ENCODE measurements at regions of chr11 and their contacts with region 1.

Region 1: GRCh38 chr11:123054301-123055065 is 7.5 kb downstream of the HSPA8 start:
- DNase-seq: no peak
- H3K4me3 Mint-ChIP-seq: no peak overlapping the region
- H3K27ac Mint-ChIP-seq: peak overlapping the region; percentile 67
- H3K4me1 Mint-ChIP-seq: peaks cover 54% of the 10 kb centered on the region
- H3K27me3 Mint-ChIP-seq: no peaks in the 10 kb centered on the region

Region 2: GRCh38 chr11:122998727-122999366 is 55.6 kb before region 1 on chr11:
- CTCF ChIA-PET with region 1: no interaction called
- POLR2A ChIA-PET with region 1: no interaction called
- DNase-seq: no peak
- H3K4me3 Mint-ChIP-seq: no peak overlapping the region
- H3K27ac Mint-ChIP-seq: no peak overlapping the region
- H3K4me1 Mint-ChIP-seq: no peaks in the 10 kb centered on the region
- H3K27me3 Mint-ChIP-seq: peaks cover 31% of the 10 kb centered on the region

Region 3: DNA sequence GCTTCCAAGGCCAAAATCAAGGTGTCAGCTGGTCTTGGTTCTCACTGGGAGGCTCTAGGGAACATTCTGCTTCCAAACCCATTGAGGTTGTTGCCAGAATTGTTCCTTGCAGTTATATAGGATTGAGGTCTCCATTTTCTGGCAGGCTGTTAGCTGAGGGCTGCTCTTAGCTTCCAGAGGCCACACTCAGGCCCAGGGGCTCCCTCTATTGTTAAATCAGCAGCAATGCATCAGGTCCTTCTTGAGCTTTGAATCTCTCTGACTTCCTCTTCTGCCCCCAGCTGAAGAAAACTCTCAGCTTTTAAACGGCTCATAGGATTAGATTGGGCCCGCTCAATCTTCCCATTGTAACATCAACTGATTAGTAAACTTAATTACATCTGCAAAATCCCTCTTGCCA is 33.5 kb before region 1 on chr11:
- CTCF ChIA-PET with region 1: interaction called, 65 read pairs
- POLR2A ChIA-PET with region 1: interaction called, 3 read pairs
- DNase-seq: peak; percentile 38
- H3K4me3 Mint-ChIP-seq: no peak overlapping the region
- H3K27ac Mint-ChIP-seq: no peak overlapping the region
- H3K4me1 Mint-ChIP-seq: peaks cover 6% of the 10 kb centered on the region
- H3K27me3 Mint-ChIP-seq: peaks cover 18% of the 10 kb centered on the region

Region 4: DNA sequence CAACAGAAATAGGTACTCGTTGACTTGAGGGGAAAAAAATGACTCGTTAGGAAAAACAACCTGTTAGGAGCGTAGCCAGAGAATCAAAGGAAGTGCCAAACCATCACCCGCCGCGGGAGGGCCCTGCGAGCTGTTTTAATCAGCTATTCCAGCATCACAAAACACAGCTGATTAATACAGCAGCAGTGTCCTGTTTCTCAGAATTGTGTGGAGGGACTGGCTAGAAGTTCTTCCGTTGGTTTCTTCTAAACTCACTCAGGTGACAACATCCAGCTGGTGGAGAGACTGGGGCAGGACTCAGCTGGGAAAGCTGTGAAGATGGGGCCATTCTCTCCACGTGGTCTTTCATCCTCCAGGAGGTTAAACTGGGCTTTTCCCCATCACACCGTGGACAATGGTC is 20.6 kb before region 1 on chr11:
- CTCF ChIA-PET with region 1: interaction called, 17 read pairs
- POLR2A ChIA-PET with region 1: interaction called, 5 read pairs
- DNase-seq: no peak
- H3K4me3 Mint-ChIP-seq: no peak overlapping the region
- H3K27ac Mint-ChIP-seq: no peak overlapping the region
- H3K4me1 Mint-ChIP-seq: no peaks in the 10 kb centered on the region
- H3K27me3 Mint-ChIP-seq: peaks cover 2% of the 10 kb centered on the region

Region 5: GRCh38 chr11:123069908-123070821 is 15.7 kb after region 1 on chr11:
- CTCF ChIA-PET with region 1: interaction called, 24 read pairs
- POLR2A ChIA-PET with region 1: interaction called, 151 read pairs
- DNase-seq: no peak
- H3K4me3 Mint-ChIP-seq: peak overlapping the region; percentile 79
- H3K27ac Mint-ChIP-seq: peak overlapping the region; percentile 99
- H3K4me1 Mint-ChIP-seq: peaks cover 61% of the 10 kb centered on the region
- H3K27me3 Mint-ChIP-seq: no peaks in the 10 kb centered on the region

Region 6: DNA sequence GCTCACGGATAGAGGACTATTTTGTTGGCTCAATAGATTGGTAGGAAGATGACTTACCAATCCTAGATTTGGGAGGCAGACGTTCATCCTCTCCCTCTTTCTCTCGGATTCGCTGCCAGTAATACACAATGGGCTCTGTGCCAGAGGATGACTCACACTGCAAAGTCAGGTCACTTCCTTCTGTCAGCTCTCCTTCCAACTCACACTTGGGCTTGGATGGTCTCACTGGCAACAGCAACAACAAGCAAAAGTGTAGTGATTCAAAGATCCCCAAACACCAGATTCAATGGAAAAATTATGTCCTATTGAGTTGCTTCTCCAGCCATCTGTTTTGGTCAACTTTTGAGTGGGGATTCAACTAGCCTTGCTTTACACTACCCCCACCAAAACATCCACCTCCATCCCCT is 29.1 kb after region 1 on chr11:
- CTCF ChIA-PET with region 1: interaction called, 11 read pairs
- POLR2A ChIA-PET with region 1: interaction called, 391 read pairs
- DNase-seq: peak; percentile 82
- H3K4me3 Mint-ChIP-seq: peak overlapping the region; percentile 59
- H3K27ac Mint-ChIP-seq: peak overlapping the region; percentile 76
- H3K4me1 Mint-ChIP-seq: peaks cover 57% of the 10 kb centered on the region
- H3K27me3 Mint-ChIP-seq: no peaks in the 10 kb centered on the region

Region 7: GRCh38 chr11:123174196-123175183 is 120.0 kb after region 1 on chr11:
- CTCF ChIA-PET with region 1: no interaction called
- POLR2A ChIA-PET with region 1: no interaction called
- DNase-seq: no peak
- H3K4me3 Mint-ChIP-seq: no peak overlapping the region
- H3K27ac Mint-ChIP-seq: no peak overlapping the region
- H3K4me1 Mint-ChIP-seq: no peaks in the 10 kb centered on the region
- H3K27me3 Mint-ChIP-seq: peaks cover 7% of the 10 kb centered on the region

Region 8: GRCh38 chr11:123206791-123207434 is 152.4 kb after region 1 on chr11:
- CTCF ChIA-PET with region 1: no interaction called
- POLR2A ChIA-PET with region 1: no interaction called
- DNase-seq: no peak
- H3K4me3 Mint-ChIP-seq: no peak overlapping the region
- H3K27ac Mint-ChIP-seq: no peak overlapping the region
- H3K4me1 Mint-ChIP-seq: no peaks in the 10 kb centered on the region
- H3K27me3 Mint-ChIP-seq: peaks cover 52% of the 10 kb centered on the region

Measured in activated CD4-positive, alpha-beta memory T cell treated with anti-CD3 and anti-CD28 coated beads, Interleukin-2, amount 10 ng/mL, durations not matched to agents 7 days and 5 days (primary cell).